ENCODE measurements at regions of chr6 and their contacts with region 1.

Region 1: GRCh38 chr6:51398064-51398705 is 579.5 kb downstream of the TFAP2B start:
- DNase-seq: peak; percentile 13
- H3K4me3 Mint-ChIP-seq: no peak overlapping the region
- H3K27ac Mint-ChIP-seq: no peak overlapping the region
- H3K4me1 Mint-ChIP-seq: peaks cover 25% of the 10 kb centered on the region
- H3K27me3 Mint-ChIP-seq: no peaks in the 10 kb centered on the region
- CTCF ChIP-seq: no peak

Region 2: DNA sequence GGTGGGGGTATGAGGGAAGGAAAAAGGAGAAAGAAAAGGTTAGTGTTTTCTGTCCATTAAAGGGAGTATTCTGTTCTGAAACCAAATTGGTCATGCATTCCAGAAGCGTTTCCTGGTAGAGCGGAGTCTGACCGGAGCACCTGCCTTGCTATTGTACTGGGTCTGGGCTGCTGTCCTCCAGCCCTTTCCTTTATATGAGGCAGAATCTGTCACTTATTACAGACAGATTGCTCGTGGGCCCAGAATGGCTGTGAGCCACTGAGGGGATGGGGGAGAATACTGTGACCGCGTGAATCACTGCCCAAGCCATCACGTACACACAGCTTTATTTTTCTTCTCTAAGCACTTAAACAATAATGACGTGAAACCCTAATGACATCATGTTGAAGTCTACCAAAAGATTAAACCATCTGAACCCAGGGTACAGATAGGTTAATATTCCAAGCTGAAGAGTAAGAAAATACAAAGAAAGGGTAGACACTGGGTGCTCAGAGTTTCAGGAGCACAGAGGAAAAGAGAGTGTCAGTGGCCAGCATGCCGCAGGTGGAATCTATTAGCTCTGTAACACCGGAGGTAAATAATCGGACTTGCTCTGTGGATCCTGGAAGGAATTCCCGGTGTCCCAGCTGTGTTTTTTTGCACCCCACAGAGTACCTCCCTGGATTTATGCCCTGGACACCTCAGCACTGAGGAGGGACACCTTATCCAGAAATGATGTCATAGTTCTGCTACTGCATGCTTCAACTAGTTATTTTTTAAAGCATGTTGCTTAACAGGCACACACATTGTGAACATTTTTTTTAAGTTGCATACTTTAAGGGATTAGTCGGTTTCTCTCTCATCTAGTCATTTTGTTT is 115.9 kb after region 1 on chr6:
- CTCF ChIA-PET with region 1: no interaction called
- intact Hi-C with region 1: loop called (anchors 10 kb)
- DNase-seq: peak; percentile 25
- H3K4me3 Mint-ChIP-seq: peak overlapping the region; percentile 63
- H3K27ac Mint-ChIP-seq: peak overlapping the region; percentile 60
- H3K4me1 Mint-ChIP-seq: peaks cover 11% of the 10 kb centered on the region
- H3K27me3 Mint-ChIP-seq: peaks cover 1% of the 10 kb centered on the region
- CTCF ChIP-seq: no peak

Region 3: DNA sequence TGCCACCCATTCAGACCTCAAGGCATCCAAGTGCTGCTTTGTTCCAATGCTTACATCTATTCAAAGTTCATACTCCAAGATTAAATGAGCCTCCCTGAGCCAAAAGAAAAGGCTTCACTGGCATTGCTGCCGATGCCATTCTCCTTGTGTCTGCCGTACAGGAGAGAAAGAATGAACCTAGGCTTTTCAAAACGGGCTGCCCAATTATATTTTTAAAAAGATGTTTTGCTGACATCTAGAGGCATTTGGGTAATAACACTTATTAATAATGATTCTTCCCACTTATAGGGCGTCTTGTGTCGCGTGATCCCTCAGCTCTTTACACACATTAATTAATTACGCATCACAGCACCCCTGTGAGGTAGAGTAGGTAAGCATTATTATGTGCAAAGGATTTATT is 143.7 kb after region 1 on chr6:
- CTCF ChIA-PET with region 1: no interaction called
- intact Hi-C with region 1: loop called (anchors 5 kb)
- DNase-seq: no peak
- H3K4me3 Mint-ChIP-seq: no peak overlapping the region
- H3K27ac Mint-ChIP-seq: no peak overlapping the region
- H3K4me1 Mint-ChIP-seq: peaks cover 8% of the 10 kb centered on the region
- H3K27me3 Mint-ChIP-seq: peaks cover 36% of the 10 kb centered on the region
- CTCF ChIP-seq: no peak

Measured in Calu3 (cell line).